Calu3 (cell line): ENCODE measurements at regions of chr5 and their contacts with region 1.

Region 1: DNA sequence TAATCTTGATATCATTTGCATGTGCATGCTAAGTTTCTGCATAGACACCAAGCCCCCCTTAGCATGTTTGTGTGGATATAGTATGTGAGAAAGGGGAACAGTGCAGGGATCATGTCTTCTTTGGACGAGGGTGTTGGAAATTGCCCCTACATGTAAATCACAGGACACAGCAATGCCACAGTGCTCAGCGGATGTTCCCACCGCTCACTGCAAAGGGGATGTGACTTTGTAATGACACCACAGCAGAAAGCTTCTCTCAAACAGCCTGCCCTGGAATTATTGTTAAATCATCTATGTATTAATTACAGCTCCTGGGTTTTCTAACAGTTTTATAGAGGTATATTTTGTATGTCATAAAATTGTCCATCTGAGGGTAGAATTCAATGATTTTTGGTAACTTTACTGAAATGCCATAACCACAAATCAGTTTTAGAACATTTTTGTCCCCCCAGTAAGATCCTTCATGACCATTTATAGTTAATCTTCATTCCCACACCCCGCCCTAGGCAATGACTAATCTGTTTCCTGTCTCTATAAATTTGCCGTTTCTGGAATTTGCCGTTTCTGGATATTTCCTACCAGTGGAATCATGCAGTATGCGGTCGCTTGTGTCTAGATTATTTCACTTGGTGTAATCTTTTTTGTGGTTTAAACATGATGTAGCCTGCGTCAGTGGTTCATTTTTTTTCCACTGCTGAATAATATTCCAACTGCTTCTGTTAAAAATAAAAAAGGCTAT is 648.5 kb upstream of the WWC1 start:
- DNase-seq: peak; percentile 10
- H3K4me3 Mint-ChIP-seq: no peak overlapping the region
- H3K27ac Mint-ChIP-seq: peak overlapping the region; percentile 63
- H3K4me1 Mint-ChIP-seq: peaks cover 45% of the 10 kb centered on the region
- H3K27me3 Mint-ChIP-seq: no peaks in the 10 kb centered on the region
- CTCF ChIP-seq: no peak

Region 2: DNA sequence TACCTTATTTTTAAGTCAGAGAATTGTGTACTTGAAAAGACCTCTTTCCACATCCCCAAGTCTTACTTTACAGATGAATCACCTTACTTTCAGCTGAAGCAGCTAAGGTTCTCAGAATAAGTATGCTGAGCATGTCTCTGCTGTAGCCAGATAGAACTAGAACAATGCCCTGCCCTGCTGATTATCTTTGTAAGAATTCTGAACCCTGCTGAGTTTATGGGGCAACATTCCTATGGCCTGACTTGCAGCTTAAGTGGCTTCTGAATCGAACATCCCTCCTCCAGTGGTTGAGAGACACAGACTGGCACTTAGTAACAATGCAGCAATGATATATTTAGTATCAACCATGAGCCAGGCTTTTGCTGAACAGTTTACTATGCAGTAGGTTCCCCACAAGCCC is 56.5 kb after region 1 on chr5:
- CTCF ChIA-PET with region 1: interaction called, 6 read pairs
- intact Hi-C with region 1: loop called (anchors 5 kb)
- DNase-seq: peak; percentile 79
- H3K4me3 Mint-ChIP-seq: peak overlapping the region; percentile 18
- H3K27ac Mint-ChIP-seq: peak overlapping the region; percentile 86
- H3K4me1 Mint-ChIP-seq: peaks cover 36% of the 10 kb centered on the region
- H3K27me3 Mint-ChIP-seq: no peaks in the 10 kb centered on the region
- CTCF ChIP-seq: no peak